Heart left ventricle (tissue), 16 donors: ENCODE measurements at regions of chr1 and their contacts with region 1.

Region 1: GRCh38 chr1:178581351-178582303 is 68.7 kb downstream of the TEX35 start:
- DNase-seq: no peak
- ATAC-seq: no peak
- H3K4me3 ChIP-seq: no peak overlapping the region
- H3K27ac ChIP-seq: no peak overlapping the region
- H3K4me1 ChIP-seq: no peaks in the 10 kb centered on the region
- H3K27me3 ChIP-seq: no peaks in the 10 kb centered on the region
- CTCF ChIP-seq: no peak
- POLR2A ChIP-seq: no peak

Region 2: DNA sequence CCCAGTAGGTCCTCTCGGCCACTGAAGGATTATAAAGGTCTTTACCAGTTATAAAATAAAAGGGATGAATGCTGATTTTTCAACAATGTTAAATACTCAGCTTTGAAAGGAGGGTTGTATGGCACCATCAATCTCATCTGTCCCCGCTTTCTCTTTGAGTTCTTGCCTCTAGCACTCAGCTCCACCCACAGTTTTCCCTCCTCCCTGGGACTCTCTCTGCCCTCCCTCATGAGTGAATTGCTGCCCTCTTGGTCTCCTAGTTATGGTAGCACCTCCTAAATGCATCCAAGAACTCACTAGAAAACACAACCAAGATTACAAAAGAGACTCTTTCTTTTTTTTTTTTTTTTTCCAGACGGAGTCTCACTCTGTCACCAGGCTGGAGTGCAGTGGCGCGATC is 22.3 kb after region 1 on chr1:
- intact Hi-C with region 1: loop called in 1 of 10 experiments (anchors 2 kb)
- DNase-seq: no peak
- ATAC-seq: no peak
- H3K4me3 ChIP-seq: no peak overlapping the region
- H3K27ac ChIP-seq: no peak overlapping the region
- H3K4me1 ChIP-seq: peaks cover 0 to 8% (median 0%) of the 10 kb centered on the region in 12 donors
- H3K27me3 ChIP-seq: no peaks in the 10 kb centered on the region
- CTCF ChIP-seq: no peak
- POLR2A ChIP-seq: no peak